ENCODE measurements at regions of chr12 and their contacts with region 1.

Region 1: GRCh38 chr12:98593351-98594049 is at the start of gene SLC25A3:
- DNase-seq: peak; percentile 86
- H3K4me3 ChIP-seq: peak within 1 kb of the TSS; percentile 79 to 99 (median 92)
- H3K27ac ChIP-seq: peak within 1 kb of the TSS; percentile 93 to 100 (median 100)
- H3K4me1 ChIP-seq: peaks cover 9 to 40% (median 10%) of the 10 kb centered on the region in 3 donors
- H3K27me3 ChIP-seq: no peaks in the 10 kb centered on the region
- CTCF ChIP-seq: peak in 1 of 6 experiments; percentile 9
- POLR2A ChIP-seq: peak in 3 of 4 donors; percentile 67 to 99 (median 98)
- total RNA-seq, gene SLC25A3: 459 to 581 (median 540) TPM

Region 2: DNA sequence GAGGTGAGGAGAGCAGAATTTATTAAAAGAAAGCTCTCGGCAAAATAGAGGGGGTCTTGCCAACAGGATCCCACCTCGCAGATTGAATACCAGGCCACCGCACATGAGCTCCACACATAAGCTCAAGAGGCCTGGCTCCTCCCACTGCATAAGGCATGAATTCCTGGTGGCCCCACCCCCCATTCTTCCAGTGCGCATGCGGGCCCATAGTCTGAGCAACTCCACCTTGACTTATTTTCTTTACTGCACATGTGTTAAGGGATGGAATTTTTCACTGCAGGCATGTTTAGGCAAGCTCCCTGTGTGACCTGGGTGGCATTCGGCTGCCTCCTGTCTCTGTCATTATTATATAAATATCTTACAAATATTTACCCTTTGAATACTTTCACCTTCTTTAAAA is 718.4 kb before region 1 on chr12:
- intact Hi-C with region 1: no loop called
- DNase-seq: no peak
- H3K4me3 ChIP-seq: no peak overlapping the region
- H3K27ac ChIP-seq: no peak overlapping the region
- H3K4me1 ChIP-seq: no peaks in the 10 kb centered on the region
- H3K27me3 ChIP-seq: no peaks in the 10 kb centered on the region
- CTCF ChIP-seq: no peak
- POLR2A ChIP-seq: no peak

Region 3: DNA sequence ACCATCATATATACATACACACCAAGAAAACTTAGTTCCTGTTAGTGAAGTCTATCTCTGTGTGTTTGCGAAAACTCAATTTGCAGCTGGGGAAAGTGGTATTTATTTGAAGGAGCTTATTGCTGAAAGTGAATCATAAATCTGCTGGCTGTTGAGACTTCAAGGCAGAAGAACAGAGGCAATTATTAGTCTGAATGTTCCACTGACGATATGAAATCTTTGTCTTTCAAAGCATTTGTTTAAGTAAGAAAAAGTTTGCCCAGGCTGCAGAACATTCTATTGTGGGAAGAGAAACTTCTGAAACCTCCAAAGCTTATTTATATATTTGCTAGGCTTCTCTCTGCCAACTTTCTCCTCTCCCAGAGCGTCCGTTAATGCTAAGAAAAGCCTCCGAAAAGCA is 333.8 kb before region 1 on chr12:
- intact Hi-C with region 1: no loop called
- DNase-seq: no peak
- H3K4me3 ChIP-seq: no peak overlapping the region
- H3K27ac ChIP-seq: no peak overlapping the region
- H3K4me1 ChIP-seq: no peaks in the 10 kb centered on the region
- H3K27me3 ChIP-seq: no peaks in the 10 kb centered on the region
- CTCF ChIP-seq: no peak
- POLR2A ChIP-seq: no peak

Region 4: DNA sequence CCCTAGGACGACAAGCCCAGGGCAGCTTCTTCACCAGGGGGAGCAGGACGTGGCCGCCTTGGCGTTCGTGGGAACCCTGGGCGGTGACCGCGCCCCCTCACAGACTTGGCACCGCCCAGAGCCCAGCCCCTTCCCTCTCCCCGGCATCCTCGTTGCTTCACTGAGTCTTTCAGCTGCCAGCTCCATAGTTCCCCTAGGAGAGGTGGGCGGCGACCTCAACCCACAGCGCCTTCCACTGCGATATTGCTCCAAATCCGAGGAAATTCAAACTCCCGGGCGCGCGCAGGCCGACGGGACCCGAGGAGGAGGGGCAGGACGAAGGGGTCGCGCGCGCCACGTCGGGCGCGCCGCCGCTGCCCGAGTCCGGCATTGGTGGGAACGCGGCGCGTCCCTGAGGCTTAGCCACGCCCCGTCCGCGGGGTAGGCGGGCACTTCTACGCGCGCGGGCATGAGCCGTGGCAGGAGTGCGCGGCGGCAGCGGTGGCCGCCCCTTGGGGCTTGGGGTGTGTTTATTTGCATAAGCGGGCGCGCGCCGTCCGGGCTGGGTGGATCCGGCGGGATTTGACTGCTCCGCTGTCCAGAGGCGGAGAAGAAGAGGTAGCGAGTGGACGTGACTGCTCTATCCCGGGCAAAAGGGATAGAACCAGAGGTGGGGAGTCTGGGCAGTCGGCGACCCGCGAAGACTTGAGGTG is 51.4 kb after region 1 on chr12 and contains the starts of genes APAF1 and IKBIP:
- intact Hi-C with region 1: loop called (anchors 10 kb)
- DNase-seq: peak; percentile 93
- H3K4me3 ChIP-seq: peak within 1 kb of the TSS; percentile 83 to 98 (median 97)
- H3K27ac ChIP-seq: peak within 1 kb of the TSS; percentile 91 to 96 (median 94)
- H3K4me1 ChIP-seq: peaks cover 3 to 38% (median 11%) of the 10 kb centered on the region in 3 donors
- H3K27me3 ChIP-seq: no peaks in the 10 kb centered on the region
- CTCF ChIP-seq: peak in 1 of 6 experiments; percentile 26
- POLR2A ChIP-seq: peak in 3 of 4 donors; percentile 54 to 88 (median 79)
- total RNA-seq, gene APAF1: 4.1 to 11.1 (median 8.9) TPM
- total RNA-seq, gene IKBIP: 2.9 to 10.5 (median 6.3) TPM

Region 5: DNA sequence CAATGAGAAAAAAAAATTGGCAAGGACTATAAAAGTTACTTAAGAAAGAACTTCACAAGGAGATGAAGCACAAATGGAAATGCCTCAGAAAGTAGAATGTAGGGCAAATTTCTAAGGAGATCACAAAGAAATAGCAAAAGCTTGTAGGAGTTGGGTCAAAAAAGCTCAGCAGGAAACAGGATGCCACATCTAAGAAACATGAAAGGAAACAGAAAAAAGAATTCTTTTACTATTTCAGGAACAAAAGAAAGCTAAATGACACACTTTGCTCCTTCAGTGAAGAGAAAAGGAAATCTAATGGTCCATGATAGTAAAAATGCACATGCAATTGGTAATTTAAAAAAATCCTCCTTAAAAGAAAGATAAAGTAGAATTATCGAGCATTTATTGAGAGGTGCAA is 602.0 kb after region 1 on chr12:
- intact Hi-C with region 1: no loop called
- DNase-seq: no peak
- H3K4me3 ChIP-seq: no peak overlapping the region
- H3K27ac ChIP-seq: no peak overlapping the region
- H3K4me1 ChIP-seq: no peaks in the 10 kb centered on the region
- H3K27me3 ChIP-seq: no peaks in the 10 kb centered on the region
- CTCF ChIP-seq: no peak
- POLR2A ChIP-seq: no peak

Measured in esophagus squamous epithelium (tissue), 5 donors.